SK-N-SH (cell line): ENCODE measurements at regions of chr16 and their contacts with region 1.

Region 1: GRCh38 chr16:70703041-70703834 is 17.4 kb upstream of the MTSS2 start:
- DNase-seq: peak; percentile 88
- H3K4me3 ChIP-seq: no peak overlapping the region
- H3K27ac ChIP-seq: peak overlapping the region; percentile 96
- H3K4me1 ChIP-seq: peaks cover 54 to 73% of the 10 kb centered on the region in 2 experiments; a peak in 3 of 4 replicates
- H3K27me3 ChIP-seq: no peaks in the 10 kb centered on the region
- CTCF ChIP-seq: peak; percentile 57
- EP300 ChIP-seq: peak in 1 of 2 experiments; percentile 44; a peak in 1 of 4 replicates
- RAD21 ChIP-seq: peak; percentile 50

Region 2: GRCh38 chr16:70685938-70686375 is 17.3 kb before region 1 on chr16 and contains the start of gene MTSS2:
- CTCF ChIA-PET with region 1: interaction called, 12 read pairs
- POLR2A ChIA-PET with region 1: no interaction called
- DNase-seq: peak; percentile 97
- H3K4me3 ChIP-seq: peak within 1 kb of the TSS; percentile 76 to 97
- H3K27ac ChIP-seq: peak within 1 kb of the TSS; percentile 67 to 81
- H3K4me1 ChIP-seq: peaks cover 24 to 88% of the 10 kb centered on the region in 2 experiments
- H3K27me3 ChIP-seq: no peaks in the 10 kb centered on the region
- CTCF ChIP-seq: no peak
- EP300 ChIP-seq: peak in 1 of 2 experiments; percentile 49; a peak in 1 of 4 replicates
- RAD21 ChIP-seq: no peak
- polyA plus RNA-seq, gene MTSS2: 41.3 and 54.1 TPM in 2 replicates

Region 3: GRCh38 chr16:70715055-70715858 is 12.0 kb after region 1 on chr16:
- CTCF ChIA-PET with region 1: interaction called, 13 read pairs
- POLR2A ChIA-PET with region 1: interaction called, 17 read pairs
- DNase-seq: peak; percentile 87
- H3K4me3 ChIP-seq: peak overlapping the region; percentile 24 to 52; a peak in 2 of 4 replicates
- H3K27ac ChIP-seq: peak overlapping the region; percentile 98 to 100
- H3K4me1 ChIP-seq: peaks cover 31 to 69% of the 10 kb centered on the region in 2 experiments
- H3K27me3 ChIP-seq: no peaks in the 10 kb centered on the region
- CTCF ChIP-seq: peak; percentile 41
- EP300 ChIP-seq: peak; percentile 54 to 85; a peak in 3 of 4 replicates
- RAD21 ChIP-seq: no peak; the same call in 1 of the 2 replicates